B cell (primary cell): ENCODE measurements at regions of chr12 and their contacts with region 1.

Region 1: GRCh38 chr12:48119078-48119833 is at the start of gene PFKM:
- DNase-seq: peak; percentile 81
- ATAC-seq: peak; percentile 99
- H3K4me3 ChIP-seq: peak within 1 kb of the TSS; percentile 73 to 94 (median 86)
- H3K4me3 Mint-ChIP-seq: peak within 1 kb of the TSS; percentile 96
- H3K27ac ChIP-seq: peak within 1 kb of the TSS; percentile 21 to 62
- H3K27ac Mint-ChIP-seq: peak within 1 kb of the TSS; percentile 85
- H3K4me1 ChIP-seq: peaks cover 7 to 12% of the 10 kb centered on the region in 2 donors
- H3K4me1 Mint-ChIP-seq: peaks cover 19% of the 10 kb centered on the region
- H3K27me3 ChIP-seq: no peaks in the 10 kb centered on the region
- H3K27me3 Mint-ChIP-seq: no peaks in the 10 kb centered on the region
- CTCF ChIP-seq: no peak
- total RNA-seq, gene PFKM: 42.5 and 43.0 TPM in 2 replicates

Region 2: DNA sequence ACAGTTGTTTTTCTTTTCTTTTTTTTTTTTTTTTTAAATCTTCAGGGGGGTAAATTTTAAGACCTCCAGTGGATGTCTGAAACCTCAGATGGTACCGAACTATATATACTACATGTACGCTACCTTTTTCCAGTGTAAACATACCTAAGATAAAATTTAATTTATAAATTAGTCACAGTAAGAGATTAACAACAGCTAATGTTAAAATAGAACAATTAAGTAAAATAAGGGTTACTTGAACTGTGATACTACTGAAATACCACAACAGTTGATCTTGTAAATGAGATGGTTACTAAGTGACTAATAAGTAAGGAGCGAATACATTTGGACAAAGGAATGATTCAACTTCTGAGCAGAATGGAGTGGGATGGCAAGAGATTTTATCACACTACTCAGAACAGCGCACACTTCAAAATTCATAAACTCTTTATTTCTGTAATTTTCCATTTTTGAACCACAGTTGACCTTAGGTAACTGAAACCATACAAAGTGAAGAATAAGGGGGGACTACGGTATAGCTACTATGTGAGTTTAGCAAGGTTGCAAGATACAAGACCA is 1120.4 kb before region 1 on chr12:
- CTCF ChIA-PET with region 1: no interaction called
- POLR2A ChIA-PET with region 1: no interaction called
- intact Hi-C with region 1: no loop called
- DNase-seq: no peak
- ATAC-seq: no peak
- H3K4me3 ChIP-seq: no peak overlapping the region
- H3K4me3 Mint-ChIP-seq: no peak overlapping the region
- H3K27ac ChIP-seq: no peak overlapping the region
- H3K27ac Mint-ChIP-seq: no peak overlapping the region
- H3K4me1 ChIP-seq: no peaks in the 10 kb centered on the region
- H3K4me1 Mint-ChIP-seq: no peaks in the 10 kb centered on the region
- H3K27me3 ChIP-seq: peaks cover 0 to 2% (median 0%) of the 10 kb centered on the region in 4 experiments
- H3K27me3 Mint-ChIP-seq: peaks cover 4% of the 10 kb centered on the region
- CTCF ChIP-seq: no peak

Region 3: GRCh38 chr12:48061948-48062719 is 57.1 kb before region 1 on chr12:
- CTCF ChIA-PET with region 1: no interaction called
- POLR2A ChIA-PET with region 1: no interaction called
- intact Hi-C with region 1: no loop called
- DNase-seq: no peak
- ATAC-seq: no peak
- H3K4me3 ChIP-seq: no peak overlapping the region
- H3K4me3 Mint-ChIP-seq: no peak overlapping the region
- H3K27ac ChIP-seq: no peak overlapping the region
- H3K27ac Mint-ChIP-seq: no peak overlapping the region
- H3K4me1 ChIP-seq: no peaks in the 10 kb centered on the region
- H3K4me1 Mint-ChIP-seq: no peaks in the 10 kb centered on the region
- H3K27me3 ChIP-seq: no peaks in the 10 kb centered on the region
- H3K27me3 Mint-ChIP-seq: no peaks in the 10 kb centered on the region
- CTCF ChIP-seq: no peak

Region 4: DNA sequence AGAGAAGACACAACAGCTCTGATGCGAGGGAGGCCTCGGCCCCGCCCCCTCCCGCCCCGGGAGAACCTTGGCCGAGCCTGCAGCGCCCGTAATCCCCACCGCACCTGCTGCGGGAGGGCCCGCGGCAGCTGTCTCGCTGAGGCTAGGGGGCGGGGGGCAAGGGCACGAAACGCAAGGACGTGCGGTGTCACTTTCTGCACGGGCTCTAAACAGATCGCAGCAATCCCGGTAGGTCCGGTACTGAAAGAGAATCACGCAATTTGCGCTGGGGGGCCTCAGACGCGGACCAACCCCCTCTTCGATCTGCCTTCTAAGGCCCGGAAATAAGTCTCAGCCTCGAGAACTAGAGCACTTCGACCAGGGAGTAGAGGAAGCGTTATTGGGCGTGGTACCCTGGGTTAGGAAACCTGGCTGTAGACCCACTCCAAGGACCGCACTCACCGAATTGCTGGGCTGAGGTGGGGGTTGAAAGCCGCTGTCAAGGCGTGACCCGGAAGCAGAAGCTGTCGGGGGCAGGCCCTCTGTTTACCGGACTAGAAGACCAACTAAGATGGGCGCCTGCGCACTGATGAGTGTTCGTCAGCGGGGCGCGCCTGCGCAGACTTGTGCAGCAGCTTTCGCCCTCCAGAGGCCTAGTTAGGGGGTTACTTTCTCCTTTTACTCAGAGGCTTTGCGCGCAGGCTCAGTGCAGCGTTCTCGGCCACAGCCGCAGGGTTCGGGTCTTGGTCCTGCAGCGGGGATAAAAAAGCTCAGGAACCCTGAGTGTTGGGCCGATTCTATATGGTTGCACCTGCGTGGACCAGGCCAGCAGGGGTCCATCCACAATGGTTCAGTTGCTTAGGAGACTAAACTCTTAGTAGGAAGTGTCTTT is 38.0 kb after region 1 on chr12 and contains the start of gene ASB8:
- CTCF ChIA-PET with region 1: interaction called, 8 read pairs
- POLR2A ChIA-PET with region 1: interaction called, 7 read pairs
- intact Hi-C with region 1: loop called (anchors 1 kb)
- DNase-seq: peak; percentile 99
- ATAC-seq: peak; percentile 91
- H3K4me3 ChIP-seq: peak within 1 kb of the TSS; percentile 81 to 98 (median 88)
- H3K4me3 Mint-ChIP-seq: peak within 1 kb of the TSS; percentile 99
- H3K27ac ChIP-seq: peak within 1 kb of the TSS; percentile 67 to 84
- H3K27ac Mint-ChIP-seq: peak within 1 kb of the TSS; percentile 99
- H3K4me1 ChIP-seq: peaks cover 14 to 15% of the 10 kb centered on the region in 2 donors
- H3K4me1 Mint-ChIP-seq: peaks cover 21% of the 10 kb centered on the region
- H3K27me3 ChIP-seq: no peaks in the 10 kb centered on the region
- H3K27me3 Mint-ChIP-seq: no peaks in the 10 kb centered on the region
- CTCF ChIP-seq: peak; percentile 64
- total RNA-seq, gene ASB8: 53.2 and 54.8 TPM in 2 replicates

Region 5: DNA sequence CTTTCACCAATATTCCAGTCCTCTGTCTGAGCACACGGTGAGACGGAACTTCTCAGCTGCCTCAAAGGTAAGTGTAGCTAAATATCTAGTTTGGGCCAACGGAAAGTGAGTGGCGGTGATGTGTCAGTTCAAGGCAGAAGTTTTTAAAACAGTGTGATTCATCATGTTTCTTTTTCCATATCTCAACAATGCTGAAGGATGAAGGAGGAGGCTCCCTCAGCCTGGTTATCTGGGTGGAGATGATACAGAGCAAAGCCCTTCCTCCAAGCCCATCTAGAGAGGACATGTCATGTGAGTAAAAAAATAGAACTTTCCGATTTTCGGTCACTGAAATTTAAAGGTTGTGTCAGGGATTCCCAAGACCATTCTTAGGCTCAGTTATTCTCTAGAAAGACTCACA is 340.0 kb after region 1 on chr12:
- CTCF ChIA-PET with region 1: no interaction called
- POLR2A ChIA-PET with region 1: no interaction called
- intact Hi-C with region 1: no loop called
- DNase-seq: no peak
- ATAC-seq: no peak
- H3K4me3 ChIP-seq: no peak overlapping the region
- H3K4me3 Mint-ChIP-seq: no peak overlapping the region
- H3K27ac ChIP-seq: no peak overlapping the region
- H3K27ac Mint-ChIP-seq: no peak overlapping the region
- H3K4me1 ChIP-seq: no peaks in the 10 kb centered on the region
- H3K4me1 Mint-ChIP-seq: no peaks in the 10 kb centered on the region
- H3K27me3 ChIP-seq: peaks cover 0 to 19% (median 9%) of the 10 kb centered on the region in 4 experiments
- H3K27me3 Mint-ChIP-seq: peaks cover 50% of the 10 kb centered on the region
- CTCF ChIP-seq: no peak